Endothelial cell of umbilical vein (primary cell): ENCODE measurements at regions of chr5 and their contacts with region 1.

Region 1: DNA sequence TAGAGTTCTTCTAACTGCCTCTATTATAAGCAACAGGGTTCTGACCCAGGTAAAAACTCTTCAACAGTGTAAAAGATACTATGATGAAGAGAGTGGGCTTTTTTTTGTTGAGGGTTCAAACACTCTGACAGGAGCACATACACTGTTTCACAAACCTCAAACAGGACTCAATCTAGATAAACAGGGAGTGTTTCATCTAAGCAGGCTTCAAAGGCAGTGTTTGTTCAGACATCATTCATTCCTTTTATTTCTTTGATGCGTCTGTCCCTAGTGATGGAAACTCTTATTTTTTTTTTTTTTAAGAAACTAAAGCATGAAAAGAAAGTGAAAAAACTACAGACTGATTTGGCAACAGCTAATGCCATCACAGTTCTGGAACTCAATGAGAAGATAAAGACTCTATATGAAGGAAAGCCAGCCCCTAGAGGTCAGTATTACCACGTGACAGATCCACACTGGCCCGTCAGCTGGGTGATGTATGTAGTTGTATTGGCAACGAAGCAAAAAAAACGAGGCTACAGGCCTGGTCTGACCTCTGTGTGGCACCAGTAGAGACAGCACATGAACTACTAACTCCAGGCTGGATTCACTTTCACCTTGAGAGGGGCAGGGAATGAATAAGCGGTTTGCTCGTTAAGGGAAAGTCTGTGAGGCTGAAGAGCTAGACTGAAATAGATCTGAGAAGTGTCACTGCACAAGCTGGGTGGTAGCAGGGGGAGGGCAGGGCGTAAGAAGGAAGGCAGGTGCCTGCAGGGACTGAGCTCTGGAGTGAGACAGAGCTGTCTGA is 172.2 kb downstream of the CCDC192 start:
- DNase-seq: peak; percentile 70
- H3K4me3 ChIP-seq: no peak overlapping the region
- H3K27ac ChIP-seq: no peak overlapping the region
- H3K4me1 ChIP-seq: peaks cover 27% of the 10 kb centered on the region
- H3K27me3 ChIP-seq: no peaks in the 10 kb centered on the region
- CTCF ChIP-seq: peak in 1 of 2 donors; percentile 29
- POLR2A ChIP-seq: no peak

Region 2: GRCh38 chr5:127060470-127060985 is 814.9 kb before region 1 on chr5:
- CTCF ChIA-PET with region 1: no interaction called
- POLR2A ChIA-PET with region 1: no interaction called
- dilution Hi-C with region 1: no loop called
- intact Hi-C with region 1: no loop called
- DNase-seq: no peak
- H3K4me3 ChIP-seq: no peak overlapping the region
- H3K27ac ChIP-seq: no peak overlapping the region
- H3K4me1 ChIP-seq: no peaks in the 10 kb centered on the region
- H3K27me3 ChIP-seq: no peaks in the 10 kb centered on the region
- CTCF ChIP-seq: no peak
- POLR2A ChIP-seq: no peak

Region 3: DNA sequence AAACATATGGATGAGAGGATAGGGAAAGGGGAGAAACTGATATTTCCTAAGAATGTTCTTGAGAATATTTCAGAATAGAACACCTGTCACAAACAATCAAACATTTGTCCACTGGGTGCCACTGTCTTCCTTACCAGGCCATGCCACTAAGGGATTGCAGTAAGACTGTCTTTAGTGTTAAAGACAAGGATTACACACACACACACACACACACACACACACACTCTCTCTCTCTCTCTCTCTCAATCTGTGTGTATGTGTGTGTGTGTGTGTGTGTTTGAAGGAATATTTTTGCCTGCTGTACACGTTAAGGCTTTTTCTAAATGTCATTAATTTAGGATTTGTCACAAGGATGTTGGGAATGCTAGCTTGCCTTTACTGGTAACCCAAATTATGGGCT is 117.9 kb before region 1 on chr5:
- CTCF ChIA-PET with region 1: interaction called, 30 read pairs
- POLR2A ChIA-PET with region 1: no interaction called
- dilution Hi-C with region 1: no loop called
- intact Hi-C with region 1: loop called (anchors 1 kb)
- DNase-seq: peak; percentile 83
- H3K4me3 ChIP-seq: no peak overlapping the region
- H3K27ac ChIP-seq: no peak overlapping the region
- H3K4me1 ChIP-seq: peaks cover 4% of the 10 kb centered on the region
- H3K27me3 ChIP-seq: no peaks in the 10 kb centered on the region
- CTCF ChIP-seq: peak; percentile 33 to 37
- POLR2A ChIP-seq: no peak

Region 4: DNA sequence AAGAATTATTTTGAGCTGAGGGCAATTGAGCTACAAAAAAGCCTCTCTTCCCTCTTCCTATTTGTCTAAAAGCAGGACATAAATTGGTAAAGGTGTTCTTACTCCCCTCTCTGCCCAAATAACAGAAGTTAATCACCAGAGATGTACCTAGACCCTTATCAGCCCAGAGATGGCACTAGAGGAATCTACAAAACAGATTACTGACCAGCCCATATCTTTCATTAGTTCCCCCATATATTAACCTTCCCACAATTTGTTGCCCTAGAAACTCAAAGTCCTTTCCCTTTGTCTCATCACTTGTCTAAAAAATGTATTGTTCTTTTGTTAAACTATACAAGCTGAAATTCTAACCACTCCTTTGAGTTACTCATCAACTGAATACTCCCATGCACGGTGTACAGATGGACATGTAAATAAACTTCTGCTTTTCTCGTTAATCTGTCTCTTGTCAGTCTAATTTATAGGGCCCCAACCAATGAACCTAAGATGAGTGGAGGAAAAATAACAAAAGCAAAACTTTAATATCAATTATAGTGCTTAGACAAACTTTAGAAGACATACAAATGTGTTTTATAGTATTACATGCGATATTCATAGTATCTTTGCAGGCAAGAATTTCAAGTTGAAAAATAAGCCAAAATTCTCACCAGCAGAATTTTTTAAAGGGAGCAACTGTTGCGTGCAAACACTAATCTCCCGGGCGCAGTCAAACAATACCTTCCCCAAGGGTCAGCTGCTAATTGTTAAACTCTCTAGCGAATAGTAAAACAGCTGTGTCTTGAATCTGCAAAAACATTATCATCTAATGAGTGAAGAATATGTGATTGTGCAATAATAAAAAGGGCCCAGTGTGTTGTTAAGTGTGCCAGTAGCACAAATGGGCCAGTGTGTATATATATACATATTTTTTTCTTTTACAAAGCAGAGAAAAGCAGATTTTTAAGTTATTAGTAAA is 41.2 kb before region 1 on chr5:
- CTCF ChIA-PET with region 1: interaction called, 12 read pairs
- POLR2A ChIA-PET with region 1: no interaction called
- dilution Hi-C with region 1: no loop called
- intact Hi-C with region 1: no loop called
- DNase-seq: no peak
- H3K4me3 ChIP-seq: no peak overlapping the region
- H3K27ac ChIP-seq: no peak overlapping the region
- H3K4me1 ChIP-seq: peaks cover 7% of the 10 kb centered on the region
- H3K27me3 ChIP-seq: no peaks in the 10 kb centered on the region
- CTCF ChIP-seq: no peak
- POLR2A ChIP-seq: no peak

Region 5: DNA sequence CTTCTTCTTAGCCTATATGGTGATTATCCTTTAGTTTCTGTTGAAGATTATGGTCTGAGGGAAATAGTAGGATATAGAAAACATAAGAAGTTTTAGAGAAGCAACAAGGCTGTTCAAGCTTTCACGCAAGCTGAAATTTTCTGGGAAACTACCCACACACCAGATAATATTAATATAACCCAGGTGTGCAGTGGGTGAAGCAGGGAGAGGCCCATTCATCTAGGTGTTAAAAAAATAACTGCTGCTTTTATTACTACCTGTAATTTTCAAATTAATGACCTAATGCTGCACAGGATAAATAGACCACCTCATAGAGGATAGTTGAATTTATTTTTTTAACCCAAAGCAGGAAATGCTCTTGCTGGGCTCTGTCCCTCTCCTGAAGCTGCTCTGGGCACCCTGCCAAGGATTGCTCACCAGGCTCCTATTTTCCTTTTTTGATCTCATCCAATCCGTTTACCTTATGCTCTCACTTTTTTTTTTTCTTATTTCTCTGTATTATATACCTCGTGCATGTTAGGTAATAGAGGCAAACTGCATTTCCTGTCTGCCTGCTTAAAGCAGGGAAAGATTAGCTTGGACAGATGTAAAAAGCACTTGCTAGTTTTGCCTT is 83.8 kb after region 1 on chr5:
- CTCF ChIA-PET with region 1: interaction called, 18 read pairs
- POLR2A ChIA-PET with region 1: interaction called, 3 read pairs
- dilution Hi-C with region 1: no loop called
- intact Hi-C with region 1: loop called (anchors 1 kb)
- DNase-seq: peak; percentile 86
- H3K4me3 ChIP-seq: no peak overlapping the region
- H3K27ac ChIP-seq: peak overlapping the region; percentile 64
- H3K4me1 ChIP-seq: peaks cover 44% of the 10 kb centered on the region
- H3K27me3 ChIP-seq: no peaks in the 10 kb centered on the region
- CTCF ChIP-seq: no peak
- POLR2A ChIP-seq: no peak

Region 6: GRCh38 chr5:128083033-128083810 is 207.8 kb after region 1 on chr5 and contains the start of gene SLC12A2:
- CTCF ChIA-PET with region 1: interaction called, 45 read pairs
- POLR2A ChIA-PET with region 1: interaction called, 5 read pairs
- dilution Hi-C with region 1: no loop called
- intact Hi-C with region 1: loop called (anchors 1 kb)
- DNase-seq: peak; percentile 93
- H3K4me3 ChIP-seq: peak within 1 kb of the TSS; percentile 32 to 94 (median 85)
- H3K27ac ChIP-seq: peak within 1 kb of the TSS; percentile 76
- H3K4me1 ChIP-seq: peaks cover 25% of the 10 kb centered on the region
- H3K27me3 ChIP-seq: no peaks in the 10 kb centered on the region
- CTCF ChIP-seq: no peak
- POLR2A ChIP-seq: peak; percentile 89
- total RNA-seq, gene SLC12A2: 41.7 and 59.5 TPM in 2 replicates

Region 7: DNA sequence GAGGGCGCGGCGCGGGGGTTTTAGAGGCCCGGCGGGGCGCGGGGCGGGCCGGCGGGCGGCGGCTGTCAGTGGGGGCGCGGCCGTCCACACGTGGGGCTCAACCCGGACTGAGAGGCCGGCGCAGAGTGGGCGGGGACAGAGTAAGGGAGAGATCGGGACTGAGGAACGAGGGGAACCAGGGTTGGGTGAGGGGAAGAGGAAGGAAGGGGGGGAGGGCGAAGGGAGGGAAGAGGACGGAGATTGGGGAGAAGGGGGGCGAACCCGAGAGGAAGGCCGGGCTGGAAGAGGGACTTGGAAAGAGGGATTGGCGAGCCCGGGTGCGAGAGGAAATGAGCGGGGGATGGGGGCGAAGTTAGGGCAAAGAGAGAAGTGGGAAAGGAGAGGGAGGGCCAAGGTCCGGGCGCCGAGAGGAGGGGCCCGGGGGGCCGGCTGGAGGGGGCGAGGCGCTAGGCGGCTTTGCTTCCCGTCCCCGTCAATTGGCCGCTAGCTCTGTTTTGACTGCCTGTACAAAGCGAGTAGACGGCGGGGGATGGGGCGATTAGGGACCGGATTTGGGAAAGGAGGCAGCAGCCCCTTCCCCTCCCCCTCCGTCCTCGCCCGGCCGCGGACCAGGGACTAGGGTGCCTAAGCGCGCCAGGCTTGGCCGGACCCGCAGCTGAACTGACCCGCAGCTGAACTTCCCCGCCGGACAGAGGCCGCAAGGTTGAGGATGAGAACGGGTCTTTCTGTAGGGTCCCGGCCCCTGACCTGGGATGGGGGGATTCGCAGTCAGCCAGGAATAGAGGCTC is 663.0 kb after region 1 on chr5:
- CTCF ChIA-PET with region 1: no interaction called
- POLR2A ChIA-PET with region 1: no interaction called
- dilution Hi-C with region 1: no loop called
- intact Hi-C with region 1: loop called (anchors 2 kb)
- DNase-seq: peak; percentile 85
- H3K4me3 ChIP-seq: peak overlapping the region; percentile 65 to 96 (median 78)
- H3K27ac ChIP-seq: peak overlapping the region; percentile 22
- H3K4me1 ChIP-seq: peaks cover 2% of the 10 kb centered on the region
- H3K27me3 ChIP-seq: no peaks in the 10 kb centered on the region
- CTCF ChIP-seq: no peak
- POLR2A ChIP-seq: no peak